ENCODE measurements at regions of chr9 and their contacts with region 1.

Region 1: DNA sequence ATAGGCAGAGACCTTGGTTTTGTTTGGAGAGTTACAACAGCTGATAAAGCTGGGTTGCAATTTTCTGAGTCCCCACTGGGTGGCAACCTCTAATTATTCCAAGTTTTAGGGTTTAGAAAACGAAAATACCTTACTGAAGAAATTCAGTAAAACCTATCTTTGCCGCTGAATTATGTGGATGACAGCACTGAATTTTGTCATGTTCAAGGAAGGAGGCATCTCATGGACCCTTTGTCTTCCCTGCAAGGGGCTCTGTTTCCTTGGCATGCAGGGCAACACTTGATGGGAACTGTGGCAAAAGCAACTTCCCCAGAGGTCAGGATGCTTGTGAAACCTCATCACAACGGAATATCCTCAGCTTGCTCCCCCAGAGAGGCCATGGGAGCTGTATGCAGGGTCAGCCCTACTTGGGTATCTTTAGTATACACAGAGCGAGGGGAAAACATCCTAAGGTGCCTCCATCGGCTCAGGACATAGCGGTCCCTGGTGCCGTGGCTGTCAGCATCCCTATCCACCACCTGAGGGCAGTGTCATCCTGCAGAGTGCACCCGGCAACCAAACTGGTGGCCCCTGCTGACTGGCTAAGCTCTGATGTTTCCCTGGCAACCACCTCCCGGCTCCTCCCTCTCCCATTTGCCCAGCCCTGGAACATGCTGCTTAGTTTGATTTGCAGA is 123.1 kb downstream of the RXRA start:
- DNase-seq: peak; percentile 92
- H3K4me3 ChIP-seq: no peak overlapping the region
- H3K27ac ChIP-seq: no peak overlapping the region
- H3K4me1 ChIP-seq: no peaks in the 10 kb centered on the region
- H3K27me3 ChIP-seq: no peaks in the 10 kb centered on the region
- CTCF ChIP-seq: peak; percentile 90 to 92
- POLR2A ChIP-seq: no peak

Region 2: DNA sequence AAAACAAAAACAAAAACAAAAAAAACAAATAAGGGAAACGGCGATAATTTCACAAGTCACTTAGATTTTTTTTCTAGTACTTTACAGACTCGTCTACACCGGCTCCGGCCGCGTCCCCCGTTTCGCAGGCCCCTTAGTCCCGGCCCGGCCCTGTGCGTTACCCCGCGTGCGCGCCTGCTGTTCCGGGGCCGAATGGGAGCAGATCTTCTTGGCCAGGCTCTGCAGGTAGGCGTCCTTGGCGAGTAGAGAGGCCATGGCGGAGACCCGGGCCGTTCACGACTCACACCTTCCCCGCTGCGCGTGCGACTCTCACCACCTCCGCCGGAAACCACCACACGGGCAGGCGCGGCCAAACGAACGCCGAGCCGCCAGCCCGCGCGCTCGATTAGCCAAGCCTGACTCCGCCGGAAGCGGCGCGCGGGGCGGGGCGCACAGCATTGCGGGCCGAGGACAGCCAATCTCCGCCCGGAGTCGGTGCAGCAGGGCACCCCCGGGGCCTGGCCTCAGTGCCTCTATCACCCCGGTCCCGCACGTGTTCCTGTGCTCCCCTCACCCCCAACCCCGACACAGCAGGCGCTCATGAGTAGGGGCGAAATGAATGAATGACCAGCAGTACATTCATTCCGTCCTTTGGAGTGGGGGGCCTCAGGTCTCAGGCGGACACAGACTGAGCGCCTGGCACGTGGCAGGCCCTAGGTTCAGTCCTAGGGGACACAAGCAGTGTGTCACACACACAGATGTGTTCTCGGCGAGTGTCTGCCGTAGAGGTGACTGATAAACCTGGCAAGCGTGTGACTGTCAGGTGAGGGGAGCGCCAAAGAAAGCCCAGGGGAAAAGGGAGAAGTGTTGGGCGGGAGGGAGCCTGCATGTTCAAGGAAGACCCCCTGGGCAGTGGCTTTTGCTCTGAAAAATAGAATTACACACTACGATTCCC is 1113.2 kb before region 1 on chr9 and contains the start of gene SURF6:
- CTCF ChIA-PET with region 1: no interaction called
- POLR2A ChIA-PET with region 1: no interaction called
- dilution Hi-C with region 1: no loop called
- intact Hi-C with region 1: no loop called
- DNase-seq: peak; percentile 89
- H3K4me3 ChIP-seq: peak within 1 kb of the TSS; percentile 64 to 82 (median 71)
- H3K27ac ChIP-seq: peak within 1 kb of the TSS; percentile 44
- H3K4me1 ChIP-seq: peaks cover 7% of the 10 kb centered on the region
- H3K27me3 ChIP-seq: no peaks in the 10 kb centered on the region
- CTCF ChIP-seq: no peak
- POLR2A ChIP-seq: peak; percentile 86
- total RNA-seq, gene SURF6: 16.0 and 16.4 TPM in 2 replicates

Region 3: DNA sequence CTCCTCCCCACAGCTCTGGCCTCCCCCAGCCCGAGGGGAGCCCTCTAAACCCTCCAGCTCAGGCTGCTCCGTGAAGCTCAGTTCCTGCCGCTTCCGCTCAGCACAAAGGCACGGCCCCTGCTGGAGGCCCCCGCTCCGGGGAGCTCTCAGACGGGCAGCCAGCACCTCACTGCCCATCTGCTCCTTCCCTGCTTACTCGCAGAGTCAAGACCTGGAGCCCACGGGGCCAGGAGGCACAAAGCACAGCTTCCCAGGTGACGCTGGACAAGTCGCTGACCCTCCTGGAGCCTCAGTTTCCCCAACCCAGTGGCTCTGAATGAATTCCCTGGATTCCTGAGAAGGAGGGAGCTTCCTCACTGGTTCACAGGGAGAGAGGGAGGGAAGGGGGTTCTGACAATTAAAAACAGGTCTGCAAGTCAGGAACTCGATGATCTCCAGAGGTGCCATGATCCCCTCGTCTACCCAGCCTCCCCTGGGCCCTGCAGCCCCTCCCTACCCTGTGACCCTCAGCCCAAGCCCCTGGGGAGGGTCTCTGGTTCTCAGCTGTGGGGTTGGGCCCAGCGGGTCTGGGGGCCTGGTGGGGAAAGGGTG is 493.4 kb before region 1 on chr9:
- CTCF ChIA-PET with region 1: no interaction called
- POLR2A ChIA-PET with region 1: no interaction called
- dilution Hi-C with region 1: no loop called
- intact Hi-C with region 1: no loop called
- DNase-seq: peak; percentile 56
- H3K4me3 ChIP-seq: peak overlapping the region in 1 of 3 experiments; percentile 1
- H3K27ac ChIP-seq: peak overlapping the region; percentile 69
- H3K4me1 ChIP-seq: peaks cover 35% of the 10 kb centered on the region
- H3K27me3 ChIP-seq: no peaks in the 10 kb centered on the region
- CTCF ChIP-seq: peak in 1 of 2 donors; percentile 26
- POLR2A ChIP-seq: no peak

Region 4: DNA sequence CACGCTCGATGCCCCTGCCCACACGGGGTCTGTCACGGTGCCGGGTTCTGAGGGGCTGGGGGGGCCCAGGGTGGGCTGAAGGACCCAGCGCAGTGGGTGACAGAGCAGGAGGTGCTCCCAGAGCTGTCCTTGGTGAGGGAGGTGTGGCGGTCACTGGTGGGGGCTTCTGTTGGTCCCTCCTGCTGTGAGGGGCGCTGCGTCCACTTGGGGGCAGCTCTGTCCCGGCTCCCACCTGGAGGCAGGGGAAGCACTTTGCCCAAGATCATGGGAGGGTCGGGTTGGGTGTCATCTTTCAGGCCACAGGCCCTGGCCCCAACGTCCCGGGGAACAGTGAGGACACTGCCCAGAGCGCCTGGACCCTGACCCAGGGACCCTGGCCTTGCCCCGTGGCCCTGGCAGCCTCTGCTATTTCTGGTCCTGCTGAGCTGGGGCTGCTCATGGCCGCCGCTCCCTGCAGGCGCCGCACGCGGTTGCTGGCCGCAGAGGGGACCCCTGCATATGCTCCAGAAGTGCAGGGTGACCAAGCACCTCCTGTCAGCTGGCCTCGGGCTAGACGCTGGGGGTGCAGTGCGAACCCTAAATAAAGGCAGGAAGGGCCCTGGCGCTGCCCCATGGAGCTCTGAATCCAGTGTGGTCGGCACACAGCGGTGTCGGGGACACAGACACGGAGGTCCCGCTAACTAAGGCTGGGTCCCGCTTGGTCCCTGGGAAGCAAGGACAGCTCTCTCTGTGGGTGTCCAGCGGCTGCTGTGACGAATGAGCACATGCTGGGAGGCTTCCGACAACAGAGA is 273.4 kb before region 1 on chr9:
- CTCF ChIA-PET with region 1: interaction called, 28 read pairs
- POLR2A ChIA-PET with region 1: no interaction called
- dilution Hi-C with region 1: no loop called
- intact Hi-C with region 1: no loop called
- DNase-seq: no peak
- H3K4me3 ChIP-seq: no peak overlapping the region
- H3K27ac ChIP-seq: no peak overlapping the region
- H3K4me1 ChIP-seq: no peaks in the 10 kb centered on the region
- H3K27me3 ChIP-seq: peaks cover 2 to 3% of the 10 kb centered on the region in 2 experiments
- CTCF ChIP-seq: no peak
- POLR2A ChIP-seq: no peak

Region 5: DNA sequence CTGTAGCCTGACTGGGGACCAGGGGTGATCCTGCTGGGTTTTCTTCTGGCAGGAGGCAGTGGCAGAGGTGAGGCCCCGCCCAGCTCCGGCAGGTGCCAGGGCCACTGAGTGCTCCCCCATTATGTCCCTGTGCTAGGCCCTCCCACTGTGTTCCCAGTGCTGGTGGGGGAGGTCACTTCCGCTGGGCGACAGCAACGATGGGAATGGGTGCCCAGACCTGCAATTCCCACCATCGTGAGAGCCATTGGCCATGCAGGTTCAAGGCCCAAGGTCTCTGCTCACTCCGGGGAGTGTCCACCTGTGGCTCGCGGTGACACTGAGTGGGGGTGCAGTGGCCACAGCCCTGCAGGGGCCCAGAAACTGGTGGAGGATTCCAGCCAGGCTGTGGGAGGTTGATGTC is 24.5 kb before region 1 on chr9:
- CTCF ChIA-PET with region 1: no interaction called
- POLR2A ChIA-PET with region 1: no interaction called
- dilution Hi-C with region 1: no loop called
- intact Hi-C with region 1: no loop called
- DNase-seq: no peak
- H3K4me3 ChIP-seq: no peak overlapping the region
- H3K27ac ChIP-seq: no peak overlapping the region
- H3K4me1 ChIP-seq: no peaks in the 10 kb centered on the region
- H3K27me3 ChIP-seq: no peaks in the 10 kb centered on the region
- CTCF ChIP-seq: no peak
- POLR2A ChIP-seq: no peak

Region 6: GRCh38 chr9:134656334-134657006 is 207.1 kb after region 1 on chr9:
- CTCF ChIA-PET with region 1: interaction called, 16 read pairs
- POLR2A ChIA-PET with region 1: no interaction called
- dilution Hi-C with region 1: no loop called
- intact Hi-C with region 1: no loop called
- DNase-seq: no peak
- H3K4me3 ChIP-seq: no peak overlapping the region
- H3K27ac ChIP-seq: no peak overlapping the region
- H3K4me1 ChIP-seq: no peaks in the 10 kb centered on the region
- H3K27me3 ChIP-seq: no peaks in the 10 kb centered on the region
- CTCF ChIP-seq: no peak
- POLR2A ChIP-seq: no peak

Region 7: DNA sequence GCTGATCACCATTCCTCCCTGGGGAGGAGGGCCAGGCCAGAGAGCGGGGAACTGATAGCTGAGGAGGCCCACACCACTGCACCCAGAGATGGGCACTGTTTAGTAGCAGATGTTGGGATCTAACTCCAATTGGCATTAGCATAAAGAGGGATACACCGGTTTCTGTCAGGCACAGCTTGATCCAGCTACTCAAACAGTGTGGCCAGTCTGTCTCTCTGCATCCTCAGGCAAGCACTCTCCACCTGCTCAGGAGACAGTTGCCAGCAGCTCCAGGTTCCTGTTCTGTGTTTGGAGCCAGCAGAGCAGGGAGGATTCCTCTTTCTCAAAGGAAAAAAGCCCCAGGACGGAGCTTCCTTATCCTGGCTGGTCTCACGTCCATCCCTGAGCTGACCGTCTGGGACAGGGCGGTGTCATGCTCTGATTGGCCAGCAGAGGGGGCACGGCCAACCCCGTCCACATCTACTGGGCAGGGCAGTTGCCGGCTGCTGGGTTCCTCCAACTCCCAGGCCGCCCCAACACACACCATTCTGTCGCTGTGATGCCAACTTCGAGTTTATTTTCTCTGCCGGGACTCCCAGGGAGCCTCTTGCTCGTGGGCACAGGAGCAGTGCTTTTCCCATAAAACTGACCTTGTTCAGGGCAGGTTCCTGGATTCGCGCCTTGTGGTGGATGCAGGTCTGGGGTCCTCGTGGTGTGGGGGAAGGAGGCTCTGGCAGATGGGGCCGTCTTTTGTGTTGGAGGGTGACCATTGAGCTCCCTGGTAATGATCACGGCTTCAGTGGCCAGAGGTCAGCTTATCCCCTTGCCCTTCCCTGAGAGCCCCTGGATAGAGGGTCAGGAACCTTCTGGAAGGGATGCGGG is 240.2 kb after region 1 on chr9:
- CTCF ChIA-PET with region 1: interaction called, 50 read pairs
- POLR2A ChIA-PET with region 1: no interaction called
- dilution Hi-C with region 1: no loop called
- intact Hi-C with region 1: loop called (anchors 1 kb)
- DNase-seq: peak; percentile 63
- H3K4me3 ChIP-seq: no peak overlapping the region
- H3K27ac ChIP-seq: no peak overlapping the region
- H3K4me1 ChIP-seq: no peaks in the 10 kb centered on the region
- H3K27me3 ChIP-seq: no peaks in the 10 kb centered on the region
- CTCF ChIP-seq: peak; percentile 88 to 94
- POLR2A ChIP-seq: no peak

Region 8: GRCh38 chr9:134778841-134779411 is 329.6 kb after region 1 on chr9:
- CTCF ChIA-PET with region 1: interaction called, 8 read pairs
- POLR2A ChIA-PET with region 1: no interaction called
- dilution Hi-C with region 1: no loop called
- intact Hi-C with region 1: loop called (anchors 1 kb)
- DNase-seq: peak; percentile 49
- H3K4me3 ChIP-seq: no peak overlapping the region
- H3K27ac ChIP-seq: no peak overlapping the region
- H3K4me1 ChIP-seq: no peaks in the 10 kb centered on the region
- H3K27me3 ChIP-seq: no peaks in the 10 kb centered on the region
- CTCF ChIP-seq: peak; percentile 68 to 83
- POLR2A ChIP-seq: no peak